Panc1 (cell line): ENCODE measurements at regions of chr14 and their contacts with region 1.

Region 1: GRCh38 chr14:35365130-35366055 is 39.2 kb downstream of the NFKBIA start:
- DNase-seq: peak; percentile 58
- ATAC-seq: peak; percentile 76
- H3K4me3 ChIP-seq: no peak overlapping the region
- H3K27ac ChIP-seq: peak overlapping the region; percentile 82
- H3K4me1 ChIP-seq: peaks cover 50% of the 10 kb centered on the region
- H3K27me3 ChIP-seq: no peaks in the 10 kb centered on the region
- CTCF ChIP-seq: no peak

Region 2: DNA sequence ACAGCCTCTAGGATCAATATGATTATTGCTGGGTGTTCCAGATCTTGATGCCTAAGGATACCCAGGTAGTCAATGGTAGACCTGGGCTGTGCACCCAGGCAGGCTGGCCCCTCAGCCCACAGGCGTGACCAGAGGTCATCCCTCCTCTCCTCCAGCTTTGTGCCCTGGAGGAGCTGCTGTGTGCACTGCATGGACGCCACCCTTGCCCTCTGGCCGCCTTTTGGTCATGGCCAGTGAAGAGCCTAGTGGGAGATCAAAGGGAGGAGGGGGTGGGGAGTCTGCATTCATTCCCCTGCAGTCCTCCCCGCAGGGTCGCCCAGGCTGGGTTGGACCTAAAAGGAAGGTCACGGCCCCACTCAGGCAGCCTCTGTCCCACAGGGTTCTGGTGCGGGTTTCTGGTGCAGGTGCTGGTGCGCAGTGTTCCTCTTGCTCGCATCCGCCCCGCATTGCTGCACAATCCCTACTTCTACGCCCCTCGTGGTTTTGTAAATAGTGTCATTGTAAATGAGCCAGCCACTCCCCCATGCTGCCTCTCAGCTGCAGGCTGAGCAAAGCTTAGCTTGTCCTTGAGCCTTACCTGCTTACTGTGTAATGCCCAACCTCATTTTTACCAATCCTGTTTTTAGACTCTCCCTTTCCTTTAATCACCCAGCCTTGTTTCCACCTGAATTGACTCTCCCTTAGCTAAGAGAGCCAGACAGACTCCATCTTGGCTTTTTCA is 17.9 kb before region 1 on chr14:
- CTCF ChIA-PET with region 1: no interaction called
- POLR2A ChIA-PET with region 1: no interaction called
- in situ Hi-C with region 1: no loop called
- intact Hi-C with region 1: no loop called
- DNase-seq: no peak
- ATAC-seq: peak; percentile 91
- H3K4me3 ChIP-seq: peak overlapping the region in 1 of 2 experiments; percentile 8; a peak in 1 of 4 replicates
- H3K27ac ChIP-seq: peak overlapping the region; percentile 86
- H3K4me1 ChIP-seq: peaks cover 34% of the 10 kb centered on the region
- H3K27me3 ChIP-seq: no peaks in the 10 kb centered on the region
- CTCF ChIP-seq: no peak

Region 3: GRCh38 chr14:35519986-35520385 is 154.6 kb after region 1 on chr14:
- CTCF ChIA-PET with region 1: interaction called, 10 read pairs
- POLR2A ChIA-PET with region 1: no interaction called
- in situ Hi-C with region 1: no loop called
- intact Hi-C with region 1: no loop called
- DNase-seq: no peak
- ATAC-seq: no peak
- H3K4me3 ChIP-seq: no peak overlapping the region
- H3K27ac ChIP-seq: no peak overlapping the region
- H3K4me1 ChIP-seq: no peaks in the 10 kb centered on the region
- H3K27me3 ChIP-seq: no peaks in the 10 kb centered on the region; the same call in 1 of the 2 replicates
- CTCF ChIP-seq: no peak

Region 4: DNA sequence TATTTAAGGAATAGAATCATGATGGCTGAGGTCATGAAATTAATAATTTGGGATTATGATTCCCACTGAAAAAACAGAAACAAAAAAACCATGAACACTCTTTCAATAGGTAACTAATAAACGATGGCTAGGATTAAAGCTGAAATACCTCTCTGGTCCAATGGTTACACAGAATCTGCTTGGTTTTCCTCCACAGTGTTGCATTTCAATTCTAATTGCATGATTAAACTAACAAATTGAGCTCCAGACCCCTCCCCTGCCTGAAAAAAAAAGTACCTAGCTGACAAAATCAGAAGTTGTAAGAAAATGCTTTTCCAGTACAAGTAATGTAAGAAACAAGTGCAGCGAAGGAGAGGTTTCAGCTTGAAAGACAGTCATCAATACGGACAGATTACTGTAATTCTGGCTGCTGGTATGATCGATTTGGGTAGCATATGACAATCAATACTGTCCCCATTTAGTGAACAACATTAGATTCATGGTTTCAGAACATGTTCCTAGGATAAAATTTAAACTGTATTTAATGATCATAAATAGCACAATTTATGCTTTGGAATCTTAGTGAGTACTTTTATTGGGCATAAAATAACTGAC is 200.6 kb after region 1 on chr14:
- CTCF ChIA-PET with region 1: no interaction called
- POLR2A ChIA-PET with region 1: no interaction called
- in situ Hi-C with region 1: no loop called
- intact Hi-C with region 1: no loop called
- DNase-seq: no peak
- ATAC-seq: no peak
- H3K4me3 ChIP-seq: no peak overlapping the region
- H3K27ac ChIP-seq: no peak overlapping the region
- H3K4me1 ChIP-seq: no peaks in the 10 kb centered on the region
- H3K27me3 ChIP-seq: no peaks in the 10 kb centered on the region
- CTCF ChIP-seq: no peak